SK-N-SH (cell line): ENCODE measurements at regions of chr6 and their contacts with region 1.

Region 1: GRCh38 chr6:159633196-159633595 is 59.8 kb downstream of the SOD2 start:
- DNase-seq: peak; percentile 47
- H3K4me3 ChIP-seq: no peak overlapping the region
- H3K27ac ChIP-seq: no peak overlapping the region
- H3K4me1 ChIP-seq: no peaks in the 10 kb centered on the region
- H3K27me3 ChIP-seq: no peaks in the 10 kb centered on the region
- CTCF ChIP-seq: peak; percentile 77
- EP300 ChIP-seq: no peak
- RAD21 ChIP-seq: peak; percentile 39; the same call in 1 of the 2 replicates

Region 2: GRCh38 chr6:159463119-159463829 is 169.9 kb before region 1 on chr6:
- CTCF ChIA-PET with region 1: no interaction called
- POLR2A ChIA-PET with region 1: no interaction called
- DNase-seq: peak; percentile 31
- H3K4me3 ChIP-seq: no peak overlapping the region
- H3K27ac ChIP-seq: no peak overlapping the region
- H3K4me1 ChIP-seq: no peaks in the 10 kb centered on the region
- H3K27me3 ChIP-seq: peaks cover 16% of the 10 kb centered on the region; the same call in 1 of the 2 replicates
- CTCF ChIP-seq: peak; percentile 60
- EP300 ChIP-seq: no peak
- RAD21 ChIP-seq: peak; percentile 69

Region 3: DNA sequence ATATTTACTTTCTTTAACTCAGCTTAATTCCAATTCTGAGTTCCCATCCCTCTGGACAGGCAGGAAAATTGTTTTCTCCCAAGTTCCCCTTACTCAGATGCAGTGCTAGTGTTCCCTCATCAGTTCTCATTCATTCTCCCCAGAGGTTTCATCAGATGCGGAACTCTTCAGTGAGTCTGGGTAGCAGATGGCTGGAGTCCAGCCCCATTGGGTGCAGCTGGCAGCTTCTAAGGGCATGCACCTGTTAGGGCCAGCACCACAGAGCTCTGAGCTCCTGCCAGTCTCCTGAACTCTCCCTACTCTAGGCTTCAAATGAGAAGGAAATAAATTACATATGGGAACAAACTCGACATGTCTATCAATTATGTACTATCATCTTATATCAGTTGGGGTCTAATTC is 16.7 kb before region 1 on chr6:
- CTCF ChIA-PET with region 1: interaction called, 17 read pairs
- POLR2A ChIA-PET with region 1: no interaction called
- DNase-seq: no peak
- H3K4me3 ChIP-seq: no peak overlapping the region
- H3K27ac ChIP-seq: no peak overlapping the region
- H3K4me1 ChIP-seq: no peaks in the 10 kb centered on the region
- H3K27me3 ChIP-seq: no peaks in the 10 kb centered on the region
- CTCF ChIP-seq: no peak
- EP300 ChIP-seq: no peak
- RAD21 ChIP-seq: no peak

Region 4: DNA sequence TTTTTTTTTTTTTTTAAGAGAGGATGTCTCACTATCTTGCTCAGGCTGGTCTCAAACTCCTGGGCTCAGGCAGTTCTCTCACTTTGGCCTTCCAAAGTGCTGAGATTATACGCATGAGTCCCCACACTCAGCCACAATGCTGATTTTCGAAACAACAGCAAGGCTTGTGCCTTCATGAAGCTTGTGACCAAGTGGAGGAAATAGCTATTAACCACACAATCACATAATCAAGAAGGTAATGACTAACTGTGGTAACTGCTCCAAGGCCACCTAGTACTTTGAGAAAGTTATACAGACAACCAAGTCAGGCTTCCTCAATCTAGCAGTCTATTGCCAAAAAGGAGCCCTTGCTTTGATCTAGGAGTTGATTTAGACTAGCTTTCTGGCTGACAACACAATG is 13.5 kb after region 1 on chr6:
- CTCF ChIA-PET with region 1: interaction called, 12 read pairs
- POLR2A ChIA-PET with region 1: interaction called, 5 read pairs
- DNase-seq: no peak
- H3K4me3 ChIP-seq: no peak overlapping the region
- H3K27ac ChIP-seq: no peak overlapping the region
- H3K4me1 ChIP-seq: no peaks in the 10 kb centered on the region
- H3K27me3 ChIP-seq: no peaks in the 10 kb centered on the region
- CTCF ChIP-seq: no peak
- EP300 ChIP-seq: no peak
- RAD21 ChIP-seq: no peak